ENCODE measurements at regions of chr5 and their contacts with region 1.

Region 1: DNA sequence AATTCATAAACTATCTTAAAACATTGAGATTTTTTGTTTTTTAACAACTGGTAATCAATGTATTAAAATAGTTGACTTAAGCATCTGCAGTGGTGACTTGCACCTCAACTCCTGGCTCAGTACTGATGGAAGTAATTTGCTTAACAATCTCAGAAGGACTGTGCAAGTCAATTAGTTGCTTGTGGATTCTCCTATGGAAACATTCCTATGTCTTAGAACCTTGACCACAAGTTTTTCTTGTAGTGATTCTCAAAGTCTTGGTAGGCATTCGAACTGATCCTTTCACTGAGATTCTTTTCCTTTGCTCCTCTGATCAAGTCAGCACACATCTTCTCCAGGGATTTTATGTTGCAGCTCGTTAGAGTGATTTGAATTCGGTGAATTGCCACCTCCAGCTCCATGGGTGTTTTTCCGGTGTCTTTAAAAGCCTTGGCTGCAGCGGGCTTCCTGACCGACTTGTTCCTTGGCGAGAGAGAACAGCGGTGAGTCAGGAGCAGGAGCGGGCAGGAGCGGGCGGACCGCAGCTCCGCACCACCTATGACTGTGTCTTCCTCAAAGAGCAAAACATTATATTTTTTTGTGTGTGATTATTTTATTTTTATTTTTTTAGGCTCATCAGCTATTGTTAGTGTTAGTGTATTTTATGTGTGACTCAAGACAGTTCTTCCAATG is 21.1 kb downstream of the HMGXB3 start:
- DNase-seq: peak; percentile 96
- H3K4me3 ChIP-seq: peak overlapping the region; percentile 13
- H3K27ac ChIP-seq: peak overlapping the region; percentile 76
- H3K4me1 ChIP-seq: peaks cover 41% of the 10 kb centered on the region
- H3K27me3 ChIP-seq: no peaks in the 10 kb centered on the region
- CTCF ChIP-seq: no peak

Region 2: GRCh38 chr5:150009671-150010387 is 11.8 kb before region 1 on chr5:
- CTCF ChIA-PET with region 1: interaction called, 10 read pairs
- POLR2A ChIA-PET with region 1: interaction called, 3 read pairs
- intact Hi-C with region 1: no loop called
- DNase-seq: no peak
- H3K4me3 ChIP-seq: no peak overlapping the region
- H3K27ac ChIP-seq: no peak overlapping the region
- H3K4me1 ChIP-seq: no peaks in the 10 kb centered on the region
- H3K27me3 ChIP-seq: no peaks in the 10 kb centered on the region
- CTCF ChIP-seq: no peak

Region 3: GRCh38 chr5:150175076-150175935 is 153.7 kb after region 1 on chr5:
- CTCF ChIA-PET with region 1: no interaction called
- POLR2A ChIA-PET with region 1: interaction called, 12 read pairs
- intact Hi-C with region 1: no loop called
- DNase-seq: peak; percentile 42
- H3K4me3 ChIP-seq: no peak overlapping the region
- H3K27ac ChIP-seq: no peak overlapping the region
- H3K4me1 ChIP-seq: no peaks in the 10 kb centered on the region
- H3K27me3 ChIP-seq: no peaks in the 10 kb centered on the region
- CTCF ChIP-seq: peak; percentile 66

Measured in A673 (cell line).